ENCODE measurements at regions of chr12 and their contacts with region 1.

Region 1: GRCh38 chr12:42023733-42024494 is 120.8 kb downstream of the GXYLT1 start:
- DNase-seq: peak; percentile 79
- ATAC-seq: peak; percentile 92 to 93

Region 2: GRCh38 chr12:40946612-40947194 is 1077.2 kb before region 1 on chr12:
- intact Hi-C with region 1: loop called in 1 of 2 experiments (anchors 10 kb)
- DNase-seq: no peak
- ATAC-seq: no peak

Region 3: DNA sequence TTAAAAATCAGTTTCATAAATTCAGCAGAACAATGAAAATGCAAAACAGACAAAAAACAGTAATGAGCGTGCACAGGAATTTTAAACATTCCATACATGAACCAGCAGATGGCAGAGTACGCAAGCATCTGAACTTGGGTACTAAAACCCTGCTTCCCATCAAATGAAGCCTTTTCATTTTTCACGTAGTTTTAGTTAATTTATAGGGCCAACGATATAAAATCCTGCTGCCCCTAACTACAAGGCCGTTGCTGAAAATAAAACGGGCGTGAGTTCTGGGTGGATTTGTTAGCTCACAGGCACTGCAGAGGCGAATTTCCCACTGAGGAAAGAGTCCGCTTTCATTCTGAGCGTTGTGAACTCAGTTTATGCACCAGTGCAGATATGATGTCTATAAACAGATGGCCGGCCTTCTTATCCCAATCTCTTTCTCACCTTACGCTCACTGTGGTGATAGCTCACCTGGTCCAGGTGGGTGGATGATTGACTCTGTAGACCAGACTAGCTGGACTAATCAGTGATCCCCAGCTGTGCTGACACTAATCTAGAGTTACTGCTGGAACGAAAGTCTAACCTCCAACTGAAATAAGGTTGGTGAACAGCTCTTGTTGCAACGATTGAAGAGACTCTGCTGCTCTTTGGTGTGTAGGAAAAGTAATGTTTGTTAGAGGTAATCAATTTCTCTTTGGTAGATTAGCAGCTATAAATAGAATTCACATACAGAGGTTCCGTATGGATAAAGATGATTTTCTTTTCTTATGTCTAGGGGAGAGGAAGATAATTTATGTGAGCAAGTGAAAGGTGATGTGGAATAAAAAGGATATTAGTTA is 746.6 kb before region 1 on chr12:
- intact Hi-C with region 1: loop called (anchors 2 to 5 kb)
- DNase-seq: no peak
- ATAC-seq: peak in 1 of 2 donors; percentile 30

Region 4: DNA sequence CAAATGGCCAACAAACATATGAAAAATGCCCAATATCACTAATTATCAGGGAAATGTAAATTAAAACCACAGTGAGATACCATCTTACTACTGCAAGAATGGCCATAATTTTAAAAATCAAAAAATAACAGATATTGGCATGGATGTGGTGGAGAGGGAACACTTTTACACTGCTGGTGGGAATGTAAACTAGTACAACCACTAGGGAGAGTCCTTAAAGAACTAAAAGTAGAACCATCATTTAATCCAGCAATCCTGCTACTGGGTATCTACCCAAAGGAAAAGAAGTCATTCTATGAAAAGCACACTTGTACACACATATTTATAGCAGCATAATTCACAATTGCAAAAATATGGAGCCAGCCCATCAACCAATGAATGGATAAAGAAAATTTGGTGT is 338.9 kb before region 1 on chr12:
- intact Hi-C with region 1: loop called in 1 of 2 experiments (anchors 5 kb)
- DNase-seq: no peak
- ATAC-seq: no peak

Region 5: GRCh38 chr12:42162193-42162592 is 138.3 kb after region 1 on chr12:
- intact Hi-C with region 1: no loop called
- DNase-seq: no peak
- ATAC-seq: peak in 1 of 2 donors; percentile 49

Region 6: GRCh38 chr12:42332301-42333285 is 308.7 kb after region 1 on chr12:
- intact Hi-C with region 1: loop called in 1 of 2 experiments (anchors 5 kb)
- DNase-seq: no peak
- ATAC-seq: peak in 1 of 2 donors; percentile 41